ENCODE measurements at regions of chr11 and their contacts with region 1.

Region 1: DNA sequence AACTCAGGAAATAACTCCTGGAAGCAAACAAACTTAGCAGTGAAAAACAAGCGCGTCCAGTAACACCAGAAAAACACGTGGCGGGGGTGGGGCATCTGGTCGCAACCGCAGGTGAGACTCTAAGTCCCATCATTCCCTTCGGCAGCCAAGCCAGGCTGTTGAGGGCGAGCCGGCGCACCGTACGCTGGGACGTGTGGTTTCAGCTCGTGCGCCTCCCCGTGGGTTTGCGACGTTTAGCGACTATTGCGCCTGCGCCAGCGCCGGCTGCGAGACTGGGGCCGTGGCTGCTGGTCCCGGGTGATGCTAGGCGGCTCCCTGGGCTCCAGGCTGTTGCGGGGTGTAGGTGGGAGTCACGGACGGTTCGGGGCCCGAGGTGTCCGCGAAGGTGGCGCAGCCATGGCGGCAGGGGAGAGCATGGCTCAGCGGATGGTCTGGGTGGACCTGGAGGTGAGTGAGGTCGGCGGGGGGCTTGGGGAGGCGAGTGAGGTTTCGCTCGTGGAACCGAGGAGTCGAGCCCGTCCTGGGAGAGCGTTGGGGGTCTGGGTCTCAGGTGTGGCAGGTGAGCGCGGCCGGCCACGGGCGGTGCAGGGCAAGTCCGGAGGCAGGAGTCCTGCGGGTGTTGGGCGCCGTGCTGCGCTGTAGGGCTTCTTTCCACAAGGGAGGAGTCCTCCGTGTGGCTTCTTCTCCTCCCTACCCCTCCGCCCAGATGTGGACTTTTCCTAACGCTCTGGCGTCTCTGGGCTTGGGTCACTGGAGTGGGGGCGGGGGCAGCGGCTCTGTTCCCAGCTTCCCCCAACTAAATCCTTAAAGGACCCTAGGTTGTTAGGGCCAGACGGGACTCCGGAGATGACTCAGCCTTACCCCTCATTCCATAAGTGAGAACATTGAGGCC is at the start of gene REXO2:
- DNase-seq: peak; percentile 87 to 91 (median 88)
- H3K4me3 ChIP-seq: peak within 1 kb of the TSS; percentile 81 to 95 (median 92)
- H3K4me3 Mint-ChIP-seq: peak within 1 kb of the TSS; percentile 95 to 99
- H3K27ac ChIP-seq: peak within 1 kb of the TSS in 1 of 2 donors; percentile 53
- H3K27ac Mint-ChIP-seq: peak within 1 kb of the TSS in 5 of 7 donors; percentile 57 to 86 (median 63)
- H3K4me1 ChIP-seq: peaks cover 14 to 16% of the 10 kb centered on the region in 2 donors
- H3K4me1 Mint-ChIP-seq: peaks cover 18% of the 10 kb centered on the region
- H3K27me3 ChIP-seq: no peaks in the 10 kb centered on the region
- H3K27me3 Mint-ChIP-seq: peaks cover 0 to 6% (median 2%) of the 10 kb centered on the region in 3 donors
- CTCF ChIP-seq: peak; percentile 22
- polyA plus RNA-seq, gene REXO2: 18.0 to 22.5 (median 22.2) TPM

Region 2: GRCh38 chr11:114340311-114341131 is 99.0 kb before region 1 on chr11:
- intact Hi-C with region 1: loop called in 1 of 2 experiments (anchors 10 kb)
- DNase-seq: peak; percentile 16 to 51 (median 50)
- H3K4me3 ChIP-seq: peak overlapping the region in 1 of 3 experiments; percentile 54
- H3K4me3 Mint-ChIP-seq: peak overlapping the region; percentile 54 to 83
- H3K27ac ChIP-seq: no peak overlapping the region
- H3K27ac Mint-ChIP-seq: peak overlapping the region in 1 of 7 donors; percentile 58
- H3K4me1 ChIP-seq: peaks cover 9 to 10% of the 10 kb centered on the region in 2 donors
- H3K4me1 Mint-ChIP-seq: peaks cover 14% of the 10 kb centered on the region
- H3K27me3 ChIP-seq: peaks cover 0 to 3% of the 10 kb centered on the region in 2 donors
- H3K27me3 Mint-ChIP-seq: peaks cover 0 to 9% (median 8%) of the 10 kb centered on the region in 3 donors
- CTCF ChIP-seq: peak; percentile 81

Region 3: DNA sequence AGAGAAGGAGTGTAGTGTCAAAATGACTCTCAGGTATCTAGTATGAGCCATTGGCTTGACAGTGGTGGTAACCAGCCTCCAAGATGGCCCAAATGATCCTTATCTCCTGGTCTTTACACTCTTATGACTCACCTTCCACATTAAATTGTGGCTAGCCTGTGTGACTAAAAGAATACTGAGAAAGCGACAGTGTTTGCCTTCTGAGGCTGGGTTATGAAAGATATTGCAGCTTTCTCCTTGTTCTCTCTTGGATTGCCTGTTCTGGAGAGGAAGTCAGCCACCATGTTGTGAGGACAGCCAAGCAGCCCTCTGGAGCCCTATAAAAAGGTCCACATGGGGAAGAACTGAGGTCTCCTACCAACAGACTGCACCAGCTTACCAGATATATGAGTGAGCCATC is 55.0 kb before region 1 on chr11:
- intact Hi-C with region 1: loop called in 1 of 2 experiments (anchors 10 kb)
- DNase-seq: no peak
- H3K4me3 ChIP-seq: no peak overlapping the region
- H3K4me3 Mint-ChIP-seq: no peak overlapping the region
- H3K27ac ChIP-seq: no peak overlapping the region
- H3K27ac Mint-ChIP-seq: no peak overlapping the region
- H3K4me1 ChIP-seq: no peaks in the 10 kb centered on the region
- H3K4me1 Mint-ChIP-seq: peaks cover 7% of the 10 kb centered on the region
- H3K27me3 ChIP-seq: no peaks in the 10 kb centered on the region
- H3K27me3 Mint-ChIP-seq: peaks cover 1 to 5% (median 2%) of the 10 kb centered on the region in 3 donors
- CTCF ChIP-seq: no peak

Region 4: DNA sequence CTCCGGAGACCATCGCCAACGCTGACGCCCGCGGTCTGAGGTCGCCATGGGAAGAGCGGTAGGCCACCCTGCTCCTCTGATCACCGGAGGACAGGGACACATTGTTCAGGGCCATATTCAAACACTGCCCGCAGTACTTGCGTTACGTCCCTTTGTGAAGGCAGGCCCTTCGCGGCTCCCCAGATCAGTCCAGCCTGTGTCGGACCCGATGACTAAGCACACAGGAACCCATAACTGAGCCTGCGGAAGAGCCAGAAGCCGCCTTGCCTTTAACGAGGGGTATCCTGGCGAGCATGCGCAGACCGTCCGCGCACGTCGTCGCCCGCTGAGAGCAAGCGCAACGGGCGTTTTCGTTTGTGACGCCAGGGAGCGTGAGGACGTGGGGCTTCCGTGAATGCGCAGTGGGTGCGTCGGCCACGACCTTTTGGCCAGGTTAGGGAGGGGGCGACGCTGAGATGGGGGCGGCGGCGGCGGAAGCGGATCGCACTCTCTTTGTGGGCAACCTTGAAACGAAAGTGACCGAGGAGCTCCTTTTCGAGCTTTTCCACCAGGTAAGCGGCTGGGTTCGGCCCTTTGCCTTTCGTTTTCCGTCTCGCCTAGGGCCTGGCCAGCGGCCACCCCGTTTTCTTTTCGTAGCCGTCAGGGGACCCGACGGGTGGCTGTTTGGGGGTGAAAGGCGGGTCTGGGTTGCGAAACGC is 39.1 kb before region 1 on chr11 and contains the starts of genes C11orf71 and RBM7:
- intact Hi-C with region 1: loop called in 1 of 2 experiments (anchors 2 kb)
- DNase-seq: peak; percentile 99
- H3K4me3 ChIP-seq: peak within 1 kb of the TSS; percentile 77 to 90 (median 85)
- H3K4me3 Mint-ChIP-seq: peak within 1 kb of the TSS; percentile 91 to 96
- H3K27ac ChIP-seq: peak within 1 kb of the TSS; percentile 99
- H3K27ac Mint-ChIP-seq: peak within 1 kb of the TSS; percentile 99 to 100 (median 100)
- H3K4me1 ChIP-seq: peaks cover 26 to 45% of the 10 kb centered on the region in 2 donors
- H3K4me1 Mint-ChIP-seq: peaks cover 42% of the 10 kb centered on the region
- H3K27me3 ChIP-seq: no peaks in the 10 kb centered on the region
- H3K27me3 Mint-ChIP-seq: no peaks in the 10 kb centered on the region
- CTCF ChIP-seq: no peak
- polyA plus RNA-seq, gene C11orf71: 9.3 to 23.0 (median 14.2) TPM
- polyA plus RNA-seq, gene RBM7: 27.3 to 36.3 (median 32.4) TPM

Region 5: DNA sequence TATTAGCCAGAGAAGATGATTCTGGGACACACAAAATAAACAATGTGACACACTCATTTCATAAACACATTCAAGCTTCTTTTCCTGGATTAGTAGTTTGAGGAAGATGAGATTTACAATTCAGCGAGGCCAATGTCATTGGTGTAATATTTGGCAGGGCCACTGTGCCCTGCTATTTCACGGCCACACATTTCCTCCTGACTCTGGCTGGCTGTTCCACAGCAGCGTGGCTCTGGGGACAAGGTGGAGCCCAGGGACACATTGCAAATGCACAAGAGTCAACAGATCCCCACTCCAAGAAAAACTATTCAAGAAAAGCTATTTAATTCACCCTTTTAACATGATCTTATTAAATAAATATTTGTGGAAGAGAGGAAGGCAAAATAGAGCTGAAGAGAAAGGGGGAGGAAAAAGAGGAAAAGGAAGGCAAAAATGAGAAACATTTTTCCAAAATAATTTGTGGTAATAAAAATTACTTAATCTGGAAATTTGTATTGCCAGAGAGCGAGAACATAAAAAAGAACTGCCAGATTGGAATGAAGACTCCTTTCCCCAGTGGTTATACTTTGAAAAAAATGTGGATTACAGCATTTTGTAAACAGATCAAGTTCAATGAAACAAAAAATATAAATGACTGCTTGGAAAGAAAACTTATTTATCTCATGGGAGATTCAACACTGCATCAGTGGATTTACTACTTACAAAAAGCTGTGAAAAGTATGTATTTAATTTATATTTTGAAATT is 266.0 kb after region 1 on chr11:
- intact Hi-C with region 1: no loop called
- DNase-seq: no peak
- H3K4me3 ChIP-seq: no peak overlapping the region
- H3K4me3 Mint-ChIP-seq: no peak overlapping the region
- H3K27ac ChIP-seq: no peak overlapping the region
- H3K27ac Mint-ChIP-seq: no peak overlapping the region
- H3K4me1 ChIP-seq: no peaks in the 10 kb centered on the region
- H3K4me1 Mint-ChIP-seq: no peaks in the 10 kb centered on the region
- H3K27me3 ChIP-seq: no peaks in the 10 kb centered on the region
- H3K27me3 Mint-ChIP-seq: peaks cover 0 to 2% (median 0%) of the 10 kb centered on the region in 3 donors
- CTCF ChIP-seq: no peak

Measured in CD14-positive monocyte (primary cell).